OCI-LY7 (cell line): ENCODE measurements at regions of chr17 and their contacts with region 1.

Region 1: GRCh38 chr17:6489016-6489550 is 44.8 kb downstream of the PIMREG start:
- DNase-seq: no peak
- H3K4me3 ChIP-seq: no peak overlapping the region
- H3K27ac ChIP-seq: no peak overlapping the region
- H3K4me1 ChIP-seq: peaks cover 7% of the 10 kb centered on the region
- CTCF ChIP-seq: no peak

Region 2: GRCh38 chr17:6365190-6365943 is 123.7 kb before region 1 on chr17:
- CTCF ChIA-PET with region 1: no interaction called
- POLR2A ChIA-PET with region 1: no interaction called
- intact Hi-C with region 1: no loop called
- DNase-seq: no peak
- H3K4me3 ChIP-seq: no peak overlapping the region
- H3K27ac ChIP-seq: no peak overlapping the region
- H3K4me1 ChIP-seq: no peaks in the 10 kb centered on the region
- CTCF ChIP-seq: no peak

Region 3: GRCh38 chr17:6443692-6444569 is 45.2 kb before region 1 on chr17 and contains the start of gene PIMREG:
- CTCF ChIA-PET with region 1: interaction called, 18 read pairs
- POLR2A ChIA-PET with region 1: no interaction called
- intact Hi-C with region 1: no loop called
- DNase-seq: peak; percentile 95
- H3K4me3 ChIP-seq: peak within 1 kb of the TSS; percentile 67
- H3K27ac ChIP-seq: peak within 1 kb of the TSS; percentile 65
- H3K4me1 ChIP-seq: peaks cover 14% of the 10 kb centered on the region
- CTCF ChIP-seq: no peak
- total RNA-seq, gene PIMREG: 34.5 and 39.4 TPM in 2 replicates

Region 4: DNA sequence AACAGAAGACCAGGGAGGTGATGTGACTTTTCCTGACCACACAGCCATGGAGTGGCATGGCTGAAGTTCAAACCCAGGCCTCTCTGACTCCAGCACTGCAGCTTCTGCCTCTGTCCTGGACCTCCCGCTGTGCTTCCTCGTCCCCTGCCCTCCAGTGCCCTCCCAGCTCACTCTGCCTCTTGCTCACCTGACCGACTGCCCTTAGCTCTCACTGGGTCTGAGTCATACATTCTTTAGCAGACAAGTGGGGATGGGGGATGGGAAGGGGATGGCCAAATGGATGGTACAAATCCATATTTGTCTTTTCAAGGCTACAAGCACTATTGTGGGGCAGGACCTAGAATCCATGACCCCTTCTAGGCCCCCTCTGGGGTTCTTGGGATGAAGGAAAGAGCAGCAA is 34.2 kb after region 1 on chr17:
- CTCF ChIA-PET with region 1: no interaction called
- POLR2A ChIA-PET with region 1: no interaction called
- intact Hi-C with region 1: no loop called
- DNase-seq: no peak
- H3K4me3 ChIP-seq: no peak overlapping the region
- H3K27ac ChIP-seq: no peak overlapping the region
- H3K4me1 ChIP-seq: peaks cover 6% of the 10 kb centered on the region
- CTCF ChIP-seq: no peak